Dorsolateral prefrontal cortex (tissue), 120 donors: ENCODE measurements at regions of chr7 and their contacts with region 1.

Region 1: DNA sequence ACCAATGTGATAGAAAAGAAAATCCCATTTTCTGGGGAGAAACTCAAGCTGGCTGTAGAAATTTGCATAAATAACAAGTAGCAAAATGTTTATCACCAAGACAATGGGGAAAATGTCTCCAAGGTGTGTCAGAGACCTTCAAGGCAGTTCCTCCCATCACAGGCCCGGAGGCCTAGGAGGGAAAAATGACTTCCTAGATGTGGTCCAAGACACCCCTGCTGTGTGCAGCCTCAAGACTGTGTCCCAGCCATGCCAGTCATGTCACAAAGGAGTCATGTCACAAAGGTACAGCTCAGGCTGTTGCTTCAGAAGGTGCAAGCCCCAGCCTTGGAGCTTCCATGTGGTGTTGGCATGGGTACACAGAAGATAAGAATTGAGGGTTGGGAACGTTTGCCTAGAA is 33.7 kb upstream of the THSD7A start:
- DNase-seq: no peak
- H3K4me3 ChIP-seq: no peak overlapping the region
- H3K27ac ChIP-seq: no peak overlapping the region
- H3K27me3 ChIP-seq: no peaks in the 10 kb centered on the region
- CTCF ChIP-seq: no peak

Region 2: GRCh38 chr7:11625669-11626068 is 240.0 kb before region 1 on chr7:
- intact Hi-C with region 1: no loop called
- DNase-seq: no peak
- H3K4me3 ChIP-seq: no peak overlapping the region
- H3K27ac ChIP-seq: peak overlapping the region in 4 of 59 donors; percentile 11 to 32 (median 17)
- H3K27me3 ChIP-seq: no peaks in the 10 kb centered on the region
- CTCF ChIP-seq: no peak

Region 3: GRCh38 chr7:11742496-11742895 is 123.2 kb before region 1 on chr7:
- intact Hi-C with region 1: no loop called
- DNase-seq: no peak
- H3K4me3 ChIP-seq: no peak overlapping the region
- H3K27ac ChIP-seq: no peak overlapping the region
- H3K27me3 ChIP-seq: no peaks in the 10 kb centered on the region
- CTCF ChIP-seq: no peak

Region 4: GRCh38 chr7:11923376-11923930 is 57.8 kb after region 1 on chr7:
- intact Hi-C with region 1: loop called in 1 of 2 experiments (anchors 2 kb)
- DNase-seq: no peak
- H3K4me3 ChIP-seq: no peak overlapping the region
- H3K27ac ChIP-seq: peak overlapping the region in 1 of 59 donors; percentile 17
- H3K27me3 ChIP-seq: no peaks in the 10 kb centered on the region
- CTCF ChIP-seq: no peak